Posterior vena cava (tissue), 2 donors: ENCODE measurements at regions of chr16 and their contacts with region 1.

Region 1: DNA sequence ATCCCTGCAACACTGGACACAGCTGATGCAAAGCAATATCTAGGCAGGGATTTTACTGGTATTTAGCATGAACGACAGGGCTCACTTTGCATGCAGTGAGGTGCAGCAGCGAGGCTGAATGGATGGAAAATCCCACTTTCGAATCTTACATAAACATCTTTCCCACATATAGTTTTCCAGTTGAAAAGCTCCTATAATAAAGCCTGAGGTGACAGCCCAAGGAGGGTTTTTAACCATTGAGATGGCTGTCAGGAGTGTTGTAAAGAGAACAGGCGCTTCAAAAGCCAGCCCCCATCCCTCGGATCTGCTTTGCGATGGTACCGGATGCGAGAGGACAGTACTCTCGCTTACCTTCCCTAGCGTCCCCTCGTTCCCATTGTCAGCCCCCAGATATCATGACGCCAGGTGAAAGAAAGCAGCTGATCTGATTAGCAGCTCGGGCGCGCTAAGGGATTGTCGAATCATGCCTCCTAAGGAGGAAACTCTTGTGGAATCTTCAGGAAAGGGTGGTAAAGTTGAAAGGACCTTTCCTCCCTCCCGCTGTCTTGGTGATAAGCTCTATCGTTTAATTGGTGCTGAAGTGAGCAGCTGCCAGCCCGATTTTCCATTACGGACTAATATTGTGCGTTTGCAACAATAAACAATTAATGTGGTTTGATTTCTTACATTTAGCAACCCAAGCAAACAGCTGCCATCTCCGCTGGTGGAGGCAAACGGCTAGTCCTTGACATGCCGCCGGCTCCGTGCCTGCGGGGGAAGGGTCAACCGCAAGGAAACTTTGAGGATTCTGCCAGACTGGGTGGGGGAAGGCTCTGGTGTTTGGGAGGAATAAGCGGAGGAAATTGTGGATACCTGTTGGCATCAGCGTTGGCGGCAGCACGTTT is 1.8 kb downstream of the CDH8 start:
- DNase-seq: no peak

Region 2: GRCh38 chr16:61968242-61969076 is 66.0 kb before region 1 on chr16:
- intact Hi-C with region 1: no loop called
- DNase-seq: no peak

Region 3: DNA sequence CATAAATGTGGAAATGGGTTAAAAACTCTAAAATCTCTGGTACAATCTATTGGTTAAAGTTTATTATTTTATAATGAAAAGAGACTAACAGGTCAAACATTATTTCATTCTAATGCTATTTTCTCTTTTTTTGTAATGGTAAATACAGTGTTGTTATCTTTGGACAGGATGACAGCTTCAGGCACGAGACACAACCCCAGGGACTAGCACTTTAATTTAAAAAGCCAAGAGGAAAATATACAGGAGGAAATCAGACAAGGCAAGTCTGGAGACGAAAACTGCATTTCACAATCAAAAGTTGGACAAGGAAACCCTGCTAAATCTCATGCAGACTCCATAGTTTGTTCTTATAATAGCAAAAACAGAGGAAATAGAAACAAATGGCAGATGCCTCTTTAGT is 590.9 kb after region 1 on chr16:
- intact Hi-C with region 1: loop called in 1 of 2 experiments (anchors 5 kb)
- DNase-seq: no peak